CD8-positive, alpha-beta T cell (primary cell): ENCODE measurements at regions of chr5 and their contacts with region 1.

Region 1: GRCh38 chr5:115169487-115170133 is at the start of gene TRIM36:
- DNase-seq: peak; percentile 75 to 93 (median 88)
- ATAC-seq: peak; percentile 88
- H3K4me3 ChIP-seq: peak within 1 kb of the TSS; percentile 73 to 78
- H3K4me3 Mint-ChIP-seq: peak within 1 kb of the TSS; percentile 82
- H3K27ac ChIP-seq: no peak within 1 kb of the TSS
- H3K27ac Mint-ChIP-seq: no peak within 1 kb of the TSS
- H3K4me1 ChIP-seq: peaks cover 18% of the 10 kb centered on the region
- H3K4me1 Mint-ChIP-seq: peaks cover 13% of the 10 kb centered on the region
- H3K27me3 ChIP-seq: peaks cover 21 to 36% of the 10 kb centered on the region in 2 experiments
- H3K27me3 Mint-ChIP-seq: peaks cover 56% of the 10 kb centered on the region
- CTCF ChIP-seq: no peak
- total RNA-seq, gene TRIM36: not detected

Region 2: GRCh38 chr5:115180165-115180709 is 10.6 kb after region 1 on chr5:
- CTCF ChIA-PET with region 1: no interaction called
- POLR2A ChIA-PET with region 1: interaction called, 5 read pairs
- intact Hi-C with region 1: loop called in 1 of 2 experiments (anchors 1 kb)
- DNase-seq: peak in 4 of 9 experiments; percentile 23 to 46 (median 34)
- ATAC-seq: peak; percentile 63
- H3K4me3 ChIP-seq: peak overlapping the region; percentile 40 to 47
- H3K4me3 Mint-ChIP-seq: peak overlapping the region; percentile 80
- H3K27ac ChIP-seq: no peak overlapping the region
- H3K27ac Mint-ChIP-seq: no peak overlapping the region
- H3K4me1 ChIP-seq: peaks cover 18% of the 10 kb centered on the region
- H3K4me1 Mint-ChIP-seq: peaks cover 9% of the 10 kb centered on the region
- H3K27me3 ChIP-seq: peaks cover 41 to 43% of the 10 kb centered on the region in 2 experiments
- H3K27me3 Mint-ChIP-seq: peaks cover 77% of the 10 kb centered on the region
- CTCF ChIP-seq: no peak

Region 3: GRCh38 chr5:115262321-115263077 is 92.9 kb after region 1 on chr5 and contains the start of gene PGGT1B:
- CTCF ChIA-PET with region 1: no interaction called
- POLR2A ChIA-PET with region 1: no interaction called
- intact Hi-C with region 1: loop called in 1 of 2 experiments (anchors 1 kb)
- DNase-seq: peak; percentile 37 to 83 (median 72)
- ATAC-seq: peak; percentile 94
- H3K4me3 ChIP-seq: peak within 1 kb of the TSS; percentile 82 to 97
- H3K4me3 Mint-ChIP-seq: peak within 1 kb of the TSS; percentile 94
- H3K27ac ChIP-seq: peak within 1 kb of the TSS; percentile 62 to 91
- H3K27ac Mint-ChIP-seq: peak within 1 kb of the TSS; percentile 98
- H3K4me1 ChIP-seq: peaks cover 28% of the 10 kb centered on the region
- H3K4me1 Mint-ChIP-seq: peaks cover 49% of the 10 kb centered on the region
- H3K27me3 ChIP-seq: no peaks in the 10 kb centered on the region
- H3K27me3 Mint-ChIP-seq: no peaks in the 10 kb centered on the region
- CTCF ChIP-seq: no peak
- total RNA-seq, gene PGGT1B: 55.2 to 57.0 TPM

Region 4: GRCh38 chr5:115296124-115297022 is 126.8 kb after region 1 on chr5 and contains the start of gene CCDC112:
- CTCF ChIA-PET with region 1: no interaction called
- POLR2A ChIA-PET with region 1: no interaction called
- intact Hi-C with region 1: loop called in 1 of 2 experiments (anchors 1 kb)
- DNase-seq: peak; percentile 45 to 85 (median 70)
- ATAC-seq: peak; percentile 76
- H3K4me3 ChIP-seq: peak within 1 kb of the TSS; percentile 58 to 65
- H3K4me3 Mint-ChIP-seq: peak within 1 kb of the TSS; percentile 78
- H3K27ac ChIP-seq: no peak within 1 kb of the TSS
- H3K27ac Mint-ChIP-seq: no peak within 1 kb of the TSS
- H3K4me1 ChIP-seq: peaks cover 4% of the 10 kb centered on the region
- H3K4me1 Mint-ChIP-seq: peaks cover 12% of the 10 kb centered on the region
- H3K27me3 ChIP-seq: no peaks in the 10 kb centered on the region
- H3K27me3 Mint-ChIP-seq: no peaks in the 10 kb centered on the region
- CTCF ChIP-seq: no peak
- total RNA-seq, gene CCDC112: 1.6 to 2.7 TPM

Region 5: DNA sequence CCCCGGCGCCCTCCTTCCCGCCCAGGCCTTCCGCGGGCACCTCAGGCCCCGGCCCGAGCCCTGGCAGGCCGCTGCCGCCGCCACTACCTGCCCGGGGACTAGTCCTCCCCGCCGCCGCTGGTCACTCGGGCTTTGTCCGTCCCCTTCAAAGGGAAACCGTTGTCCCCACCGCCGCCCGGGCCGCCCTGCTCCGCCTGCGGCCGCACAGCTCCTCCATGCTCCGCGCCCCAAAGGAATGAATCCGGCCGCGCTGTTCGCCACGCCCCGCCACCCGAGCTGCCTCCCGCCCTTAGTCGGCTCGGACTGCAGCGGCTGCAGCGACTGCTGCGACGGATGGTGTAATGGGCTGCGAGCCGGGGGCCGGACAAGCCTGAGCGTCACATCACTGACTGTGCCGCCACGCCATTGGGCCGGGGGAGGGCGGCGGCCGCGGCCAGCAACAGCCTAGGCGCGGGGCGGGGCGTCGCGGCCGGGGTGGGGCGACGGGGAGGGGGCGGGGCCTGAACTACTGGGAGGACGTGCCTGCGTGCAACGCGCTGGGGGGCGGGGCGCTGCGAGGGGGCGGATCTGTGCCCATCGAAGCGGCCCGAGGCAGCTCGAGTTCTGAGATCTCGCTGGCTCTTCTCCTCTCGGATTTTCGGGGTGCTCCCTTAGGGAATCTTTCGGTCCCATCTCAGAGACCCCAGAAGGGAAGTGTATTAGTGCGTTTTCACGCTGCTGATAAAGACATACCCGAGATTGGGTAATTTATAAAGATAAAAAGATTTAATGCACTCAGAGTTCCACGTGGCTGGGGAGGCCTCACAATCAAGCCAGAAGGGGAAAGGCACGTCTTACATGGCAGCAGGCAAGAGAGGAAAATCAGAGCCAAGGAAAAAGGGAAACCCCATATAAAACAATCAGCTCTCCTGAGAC is 375.1 kb after region 1 on chr5 and contains the start of gene FEM1C:
- CTCF ChIA-PET with region 1: no interaction called
- POLR2A ChIA-PET with region 1: no interaction called
- intact Hi-C with region 1: loop called (anchors 1 to 2 kb)
- DNase-seq: peak; percentile 93 to 99 (median 97)
- ATAC-seq: peak; percentile 90
- H3K4me3 ChIP-seq: peak within 1 kb of the TSS; percentile 75
- H3K4me3 Mint-ChIP-seq: peak within 1 kb of the TSS; percentile 95
- H3K27ac ChIP-seq: peak within 1 kb of the TSS; percentile 85 to 87
- H3K27ac Mint-ChIP-seq: peak within 1 kb of the TSS; percentile 97
- H3K4me1 ChIP-seq: peaks cover 41% of the 10 kb centered on the region
- H3K4me1 Mint-ChIP-seq: peaks cover 47% of the 10 kb centered on the region
- H3K27me3 ChIP-seq: no peaks in the 10 kb centered on the region
- H3K27me3 Mint-ChIP-seq: no peaks in the 10 kb centered on the region
- CTCF ChIP-seq: no peak
- total RNA-seq, gene FEM1C: 32.7 to 32.9 TPM

Region 6: DNA sequence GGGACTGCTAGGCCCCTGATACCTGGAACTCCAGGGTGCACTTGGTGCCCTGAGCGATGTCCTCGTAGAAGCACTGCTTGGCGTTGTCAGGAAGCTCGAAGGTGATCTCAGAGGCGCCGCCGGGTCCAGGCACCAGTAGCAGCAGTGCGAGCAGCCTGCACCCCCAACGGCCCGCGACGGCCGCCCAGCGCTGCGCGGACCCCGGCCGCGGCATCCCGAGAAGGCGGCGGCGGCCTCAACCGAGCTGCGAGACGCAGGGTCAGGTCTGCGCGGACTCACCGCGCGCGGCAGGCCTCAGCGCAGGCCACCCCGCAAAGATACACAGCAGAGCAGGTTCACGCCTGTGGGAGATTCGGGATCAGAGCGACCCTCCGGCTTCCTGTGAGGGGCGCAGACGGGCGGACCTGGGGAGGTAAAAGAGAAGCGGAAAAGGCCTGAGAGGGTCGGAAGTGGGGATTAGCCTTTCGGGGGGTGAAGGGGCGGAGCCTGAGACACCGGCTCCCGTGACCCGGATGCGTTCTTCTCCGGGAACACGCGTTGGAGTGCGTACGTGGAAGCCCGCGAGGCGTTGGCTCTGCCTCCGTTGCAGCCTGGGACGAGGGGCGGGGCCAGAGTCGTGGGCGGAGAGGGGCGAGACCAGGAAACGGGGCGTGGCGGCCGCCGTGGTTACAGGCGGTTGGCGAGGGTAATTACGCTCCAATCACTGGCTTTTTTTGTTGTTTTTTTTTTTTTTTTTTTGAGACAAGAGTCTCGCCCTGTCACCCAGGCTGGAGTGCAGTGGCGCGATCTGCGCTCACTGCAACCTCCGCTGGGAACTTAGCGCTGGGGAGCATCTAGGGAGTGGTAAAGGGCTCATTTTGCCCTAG is 456.2 kb after region 1 on chr5 and contains the start of gene TMED7:
- CTCF ChIA-PET with region 1: no interaction called
- POLR2A ChIA-PET with region 1: no interaction called
- intact Hi-C with region 1: loop called in 1 of 2 experiments (anchors 5 kb)
- DNase-seq: peak; percentile 99 to 100 (median 100)
- ATAC-seq: peak; percentile 92
- H3K4me3 ChIP-seq: peak within 1 kb of the TSS; percentile 78 to 94
- H3K4me3 Mint-ChIP-seq: no peak within 1 kb of the TSS
- H3K27ac ChIP-seq: peak within 1 kb of the TSS; percentile 91 to 93
- H3K27ac Mint-ChIP-seq: no peak within 1 kb of the TSS
- H3K4me1 ChIP-seq: peaks cover 37% of the 10 kb centered on the region
- H3K4me1 Mint-ChIP-seq: peaks cover 35% of the 10 kb centered on the region
- H3K27me3 ChIP-seq: no peaks in the 10 kb centered on the region
- H3K27me3 Mint-ChIP-seq: no peaks in the 10 kb centered on the region
- CTCF ChIP-seq: no peak
- total RNA-seq, gene TMED7: 67.2 to 71.5 TPM

Region 7: DNA sequence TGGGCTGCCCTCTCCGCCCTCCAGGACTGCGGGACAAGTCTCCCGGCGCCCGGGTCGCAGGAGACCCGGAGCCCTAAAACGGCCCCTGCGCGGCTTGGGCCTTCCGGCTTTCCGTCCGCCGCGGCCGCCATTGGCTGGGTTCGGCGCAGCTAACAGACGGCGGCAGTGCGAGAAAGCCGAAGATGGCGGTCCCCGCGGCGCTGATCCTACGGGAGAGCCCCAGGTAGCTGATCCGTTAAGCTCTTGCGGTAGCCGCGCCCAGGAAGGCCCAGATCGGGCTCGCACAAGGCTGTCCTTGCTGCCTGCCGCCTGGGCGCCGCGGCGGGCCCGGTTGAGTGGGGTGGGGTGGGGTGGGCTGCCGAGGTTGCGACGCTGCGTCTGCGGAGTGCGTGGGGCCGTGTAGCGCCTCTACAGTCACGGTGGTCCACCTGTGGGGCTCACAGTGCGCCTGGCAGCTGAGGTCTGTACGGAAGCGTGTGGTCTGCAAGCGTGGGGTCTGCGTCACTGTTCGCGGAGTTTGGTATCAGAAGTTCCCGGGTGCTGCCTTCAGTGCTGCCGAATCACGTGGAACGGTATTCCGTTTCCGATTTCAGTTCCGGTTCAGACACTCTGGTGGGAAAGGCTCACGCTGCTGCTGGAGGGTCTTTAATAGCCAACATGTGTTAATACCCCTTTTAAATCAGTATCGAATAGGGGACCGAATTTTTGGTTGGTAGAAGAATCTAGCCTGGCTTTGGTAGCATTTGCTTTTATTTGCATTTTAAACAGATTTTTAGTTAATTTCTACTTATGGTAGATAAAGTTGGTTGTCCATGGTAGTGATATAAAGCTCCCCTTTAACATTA is 915.5 kb after region 1 on chr5 and contains the start of gene COMMD10:
- CTCF ChIA-PET with region 1: no interaction called
- POLR2A ChIA-PET with region 1: no interaction called
- intact Hi-C with region 1: loop called (anchors 1 to 10 kb)
- DNase-seq: peak; percentile 67 to 97 (median 85)
- ATAC-seq: peak; percentile 93
- H3K4me3 ChIP-seq: peak within 1 kb of the TSS; percentile 45 to 71
- H3K4me3 Mint-ChIP-seq: peak within 1 kb of the TSS; percentile 91
- H3K27ac ChIP-seq: peak within 1 kb of the TSS; percentile 87 to 96
- H3K27ac Mint-ChIP-seq: peak within 1 kb of the TSS; percentile 96
- H3K4me1 ChIP-seq: peaks cover 18% of the 10 kb centered on the region
- H3K4me1 Mint-ChIP-seq: peaks cover 62% of the 10 kb centered on the region
- H3K27me3 ChIP-seq: no peaks in the 10 kb centered on the region
- H3K27me3 Mint-ChIP-seq: no peaks in the 10 kb centered on the region
- CTCF ChIP-seq: no peak
- total RNA-seq, gene COMMD10: 18.0 to 18.8 TPM